ENCODE measurements at regions of chr2 and their contacts with region 1.

Region 1: GRCh38 chr2:26144953-26145680 is 27.8 kb upstream of the GAREM2 start:
- DNase-seq: peak; percentile 63
- ATAC-seq: peak; percentile 67

Region 2: DNA sequence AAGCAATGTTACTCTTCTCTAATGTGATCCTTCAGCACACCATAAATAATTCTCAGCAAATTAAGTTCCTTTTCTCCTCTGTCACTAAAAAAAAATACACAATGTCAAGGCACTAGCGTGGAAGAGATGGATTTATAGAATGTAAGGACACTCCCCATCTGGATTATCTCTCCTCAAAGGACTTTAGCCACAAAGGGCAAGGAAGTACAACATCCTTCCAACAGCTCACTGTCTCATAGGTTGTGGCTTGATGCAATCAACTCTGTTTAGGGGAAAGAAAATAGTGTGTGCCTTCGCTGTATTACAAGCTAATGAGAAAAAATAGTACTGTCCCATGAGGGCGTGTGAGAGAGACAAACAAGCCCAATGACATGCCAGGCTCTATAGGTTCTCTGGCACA is 674.3 kb before region 1 on chr2:
- intact Hi-C with region 1: no loop called
- DNase-seq: no peak
- ATAC-seq: no peak

Region 3: DNA sequence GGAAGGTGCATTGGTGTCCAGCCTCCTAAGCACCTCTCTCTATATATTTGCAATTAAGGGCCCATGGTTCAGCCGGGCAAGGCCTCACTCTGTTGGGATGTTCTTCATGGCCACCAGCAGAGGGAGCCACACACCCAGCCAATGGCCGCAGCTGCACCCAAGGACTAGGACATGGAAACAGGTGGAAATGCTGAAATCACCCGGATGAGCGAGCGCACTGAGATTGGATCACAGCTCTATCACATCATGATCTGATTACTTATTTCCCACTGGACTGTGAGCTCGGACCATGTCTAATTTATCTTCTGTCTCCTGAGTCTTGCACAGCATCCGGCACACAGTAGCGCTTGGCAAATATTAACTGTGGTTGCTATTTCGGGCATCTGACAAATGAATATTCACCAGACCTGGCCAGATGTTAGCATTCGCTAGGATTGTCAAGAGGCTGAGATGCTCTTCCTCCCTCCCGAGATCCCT is 194.0 kb before region 1 on chr2:
- intact Hi-C with region 1: loop called (anchors 10 kb)
- DNase-seq: peak; percentile 77
- ATAC-seq: peak; percentile 97

Region 4: GRCh38 chr2:26088032-26088643 is 57.0 kb before region 1 on chr2:
- intact Hi-C with region 1: loop called (anchors 10 kb)
- DNase-seq: no peak
- ATAC-seq: peak; percentile 61

Region 5: DNA sequence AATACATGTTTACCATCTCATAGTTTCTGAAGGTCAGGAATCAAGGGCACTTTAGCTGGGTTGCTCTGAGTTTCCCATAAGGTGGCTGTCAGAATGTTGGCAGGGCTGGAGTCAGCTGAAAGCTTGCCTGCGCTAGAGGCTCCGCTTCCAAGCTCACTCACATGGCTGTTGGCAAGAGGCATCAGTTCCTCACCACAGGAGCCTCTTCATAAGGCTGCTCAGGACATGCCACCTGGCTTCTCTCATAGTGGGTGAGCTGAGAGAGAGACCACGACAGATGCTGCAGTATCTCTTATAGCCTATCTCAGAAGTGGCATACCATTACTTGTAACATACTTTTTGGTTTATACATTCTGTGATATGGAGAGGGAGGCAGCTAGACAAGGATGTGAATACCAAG is 106.8 kb after region 1 on chr2:
- intact Hi-C with region 1: no loop called
- DNase-seq: peak; percentile 81
- ATAC-seq: peak; percentile 92

Measured in left ventricle myocardium superior (tissue), 1 donor.